B cell (primary cell): ENCODE measurements at regions of chr18 and their contacts with region 1.

Region 1: DNA sequence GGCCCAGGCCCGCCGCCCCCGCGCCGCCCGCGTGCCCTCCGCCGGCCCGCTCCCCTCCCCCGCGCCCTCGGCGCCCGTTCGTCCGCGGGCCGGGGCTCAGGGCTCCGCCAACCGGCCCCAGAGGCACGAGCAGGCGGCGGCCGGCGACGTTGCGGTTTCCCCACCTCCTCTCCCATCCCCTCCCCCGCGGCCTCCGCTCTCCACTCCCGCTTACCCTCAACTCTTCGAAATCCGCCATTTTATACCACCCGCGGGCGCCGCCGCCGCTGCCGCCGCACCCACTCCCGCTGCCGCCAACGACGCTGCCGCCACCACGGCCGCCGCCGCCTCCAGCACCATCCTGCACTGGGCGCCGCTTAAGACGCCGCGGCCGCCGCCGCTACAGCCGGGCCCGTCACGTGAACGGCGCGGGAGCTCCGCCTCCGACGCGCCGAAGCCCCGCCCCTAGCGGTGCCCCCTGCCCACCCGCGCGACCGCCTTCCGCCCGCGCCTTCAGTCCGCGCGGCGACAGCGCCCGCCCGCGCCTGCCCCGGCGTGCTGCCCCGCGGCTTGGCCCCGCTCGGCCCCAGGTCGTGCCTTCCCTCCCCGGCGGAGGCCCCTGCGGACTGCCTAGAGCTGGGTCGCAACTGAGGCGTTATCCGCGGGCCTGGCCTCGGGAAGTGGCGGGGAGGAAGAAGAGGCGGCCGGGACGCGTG is at the starts of genes KATNAL2 and PIAS2:
- DNase-seq: peak; percentile 91
- ATAC-seq: peak; percentile 93
- H3K4me3 ChIP-seq: peak within 1 kb of the TSS; percentile 73 to 79 (median 74)
- H3K4me3 Mint-ChIP-seq: peak within 1 kb of the TSS; percentile 95
- H3K27ac ChIP-seq: peak within 1 kb of the TSS; percentile 58 to 81
- H3K27ac Mint-ChIP-seq: peak within 1 kb of the TSS; percentile 92
- H3K4me1 ChIP-seq: peaks cover 10 to 25% of the 10 kb centered on the region in 2 donors
- H3K4me1 Mint-ChIP-seq: peaks cover 42% of the 10 kb centered on the region
- H3K27me3 ChIP-seq: no peaks in the 10 kb centered on the region
- H3K27me3 Mint-ChIP-seq: no peaks in the 10 kb centered on the region
- CTCF ChIP-seq: no peak
- total RNA-seq, gene KATNAL2: 1.8 and 3.1 TPM in 2 replicates
- total RNA-seq, gene PIAS2: 51.1 and 53.9 TPM in 2 replicates

Region 2: DNA sequence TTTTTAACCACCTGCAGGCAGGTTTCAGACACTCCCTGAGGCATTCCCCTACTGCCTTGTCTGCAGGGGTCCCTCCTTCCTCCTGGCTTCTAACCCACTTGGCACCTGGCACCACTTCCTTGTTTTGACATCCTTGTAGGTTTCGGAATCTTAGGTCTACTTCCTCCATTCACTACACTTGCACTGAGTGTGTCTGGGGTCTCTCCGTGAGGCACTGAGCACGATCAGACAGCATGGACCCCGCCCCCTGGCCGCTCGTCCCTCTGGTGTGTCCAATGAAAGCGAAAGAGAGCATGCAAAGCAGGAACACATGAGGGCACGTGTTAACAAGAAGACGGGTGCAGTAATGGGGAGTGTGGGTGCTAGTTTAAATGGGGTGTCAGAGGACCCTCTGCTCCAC is 749.3 kb before region 1 on chr18:
- CTCF ChIA-PET with region 1: no interaction called
- POLR2A ChIA-PET with region 1: no interaction called
- intact Hi-C with region 1: loop called (anchors 2 kb)
- DNase-seq: peak; percentile 93
- ATAC-seq: peak; percentile 96
- H3K4me3 ChIP-seq: peak overlapping the region in 3 of 5 experiments; percentile 18 to 46 (median 32)
- H3K4me3 Mint-ChIP-seq: peak overlapping the region; percentile 81
- H3K27ac ChIP-seq: peak overlapping the region; percentile 75 to 81
- H3K27ac Mint-ChIP-seq: peak overlapping the region; percentile 96
- H3K4me1 ChIP-seq: peaks cover 12 to 32% of the 10 kb centered on the region in 2 donors
- H3K4me1 Mint-ChIP-seq: peaks cover 26% of the 10 kb centered on the region
- H3K27me3 ChIP-seq: no peaks in the 10 kb centered on the region
- H3K27me3 Mint-ChIP-seq: no peaks in the 10 kb centered on the region
- CTCF ChIP-seq: no peak

Region 3: GRCh38 chr18:46250084-46250811 is 667.0 kb before region 1 on chr18:
- CTCF ChIA-PET with region 1: no interaction called
- POLR2A ChIA-PET with region 1: no interaction called
- intact Hi-C with region 1: loop called (anchors 2 kb)
- DNase-seq: peak; percentile 93
- ATAC-seq: peak; percentile 94
- H3K4me3 ChIP-seq: peak overlapping the region; percentile 19 to 53 (median 42)
- H3K4me3 Mint-ChIP-seq: peak overlapping the region; percentile 84
- H3K27ac ChIP-seq: peak overlapping the region; percentile 96 to 98
- H3K27ac Mint-ChIP-seq: peak overlapping the region; percentile 93
- H3K4me1 ChIP-seq: peaks cover 19 to 31% of the 10 kb centered on the region in 2 donors
- H3K4me1 Mint-ChIP-seq: peaks cover 36% of the 10 kb centered on the region
- H3K27me3 ChIP-seq: no peaks in the 10 kb centered on the region
- H3K27me3 Mint-ChIP-seq: no peaks in the 10 kb centered on the region
- CTCF ChIP-seq: no peak

Region 4: GRCh38 chr18:46946656-46947282 is 29.5 kb after region 1 on chr18:
- CTCF ChIA-PET with region 1: no interaction called
- POLR2A ChIA-PET with region 1: no interaction called
- intact Hi-C with region 1: loop called (anchors 1 kb)
- DNase-seq: peak; percentile 77
- ATAC-seq: peak; percentile 95
- H3K4me3 ChIP-seq: peak overlapping the region; percentile 72 to 97 (median 95)
- H3K4me3 Mint-ChIP-seq: no peak overlapping the region
- H3K27ac ChIP-seq: peak overlapping the region in 1 of 2 donors; percentile 3
- H3K27ac Mint-ChIP-seq: no peak overlapping the region
- H3K4me1 ChIP-seq: peaks cover 4 to 13% of the 10 kb centered on the region in 2 donors
- H3K4me1 Mint-ChIP-seq: no peaks in the 10 kb centered on the region
- H3K27me3 ChIP-seq: peaks cover 0 to 3% (median 0%) of the 10 kb centered on the region in 4 experiments
- H3K27me3 Mint-ChIP-seq: peaks cover 4% of the 10 kb centered on the region
- CTCF ChIP-seq: no peak

Region 5: GRCh38 chr18:47150029-47150823 is 233.0 kb after region 1 on chr18 and contains the start of gene HDHD2:
- CTCF ChIA-PET with region 1: no interaction called
- POLR2A ChIA-PET with region 1: interaction called, 3 read pairs
- intact Hi-C with region 1: loop called (anchors 1 kb)
- DNase-seq: peak; percentile 73
- ATAC-seq: peak; percentile 77
- H3K4me3 ChIP-seq: peak within 1 kb of the TSS; percentile 73 to 97 (median 87)
- H3K4me3 Mint-ChIP-seq: peak within 1 kb of the TSS; percentile 95
- H3K27ac ChIP-seq: peak within 1 kb of the TSS; percentile 48 to 89
- H3K27ac Mint-ChIP-seq: peak within 1 kb of the TSS; percentile 92
- H3K4me1 ChIP-seq: peaks cover 14 to 15% of the 10 kb centered on the region in 2 donors
- H3K4me1 Mint-ChIP-seq: peaks cover 35% of the 10 kb centered on the region
- H3K27me3 ChIP-seq: no peaks in the 10 kb centered on the region
- H3K27me3 Mint-ChIP-seq: no peaks in the 10 kb centered on the region
- CTCF ChIP-seq: no peak
- total RNA-seq, gene HDHD2: 43.9 and 45.5 TPM in 2 replicates

Region 6: GRCh38 chr18:47175908-47176575 is 258.8 kb after region 1 on chr18 and contains the start of gene IER3IP1:
- CTCF ChIA-PET with region 1: no interaction called
- POLR2A ChIA-PET with region 1: no interaction called
- intact Hi-C with region 1: loop called (anchors 2 kb)
- DNase-seq: peak; percentile 92
- ATAC-seq: peak; percentile 97
- H3K4me3 ChIP-seq: peak within 1 kb of the TSS; percentile 74 to 95 (median 91)
- H3K4me3 Mint-ChIP-seq: peak within 1 kb of the TSS; percentile 26
- H3K27ac ChIP-seq: peak within 1 kb of the TSS in 1 of 2 donors; percentile 67
- H3K27ac Mint-ChIP-seq: peak within 1 kb of the TSS; percentile 86
- H3K4me1 ChIP-seq: peaks cover 14 to 15% of the 10 kb centered on the region in 2 donors
- H3K4me1 Mint-ChIP-seq: peaks cover 7% of the 10 kb centered on the region
- H3K27me3 ChIP-seq: peaks cover 0 to 6% (median 0%) of the 10 kb centered on the region in 4 experiments
- H3K27me3 Mint-ChIP-seq: peaks cover 3% of the 10 kb centered on the region
- CTCF ChIP-seq: no peak
- total RNA-seq, gene IER3IP1: 8.2 and 8.7 TPM in 2 replicates